ENCODE measurements at regions of chr15 and their contacts with region 1.

Region 1: DNA sequence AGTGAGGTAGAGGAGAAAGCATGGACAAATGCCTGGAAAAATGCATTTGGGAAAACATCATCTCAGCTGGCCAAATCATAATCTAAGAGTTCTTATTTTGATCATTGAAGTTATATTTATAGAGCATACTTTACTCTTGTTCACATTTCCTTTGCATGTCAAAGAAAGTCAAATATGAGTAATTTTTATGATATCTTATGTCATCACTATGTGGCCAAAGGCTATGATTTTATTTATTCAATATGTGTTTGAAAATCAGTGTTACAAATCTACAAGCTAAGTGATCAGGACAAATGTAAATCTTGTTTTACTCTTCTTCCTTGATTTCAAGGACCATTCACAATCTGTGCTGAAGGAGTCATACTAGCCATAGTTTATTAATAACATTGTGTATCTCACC is 237.2 kb upstream of the DPH6 start:
- DNase-seq: peak; percentile 71
- ATAC-seq: peak; percentile 88
- H3K4me3 ChIP-seq: no peak overlapping the region
- H3K27ac ChIP-seq: peak overlapping the region; percentile 41
- H3K4me1 ChIP-seq: peaks cover 15% of the 10 kb centered on the region
- H3K27me3 ChIP-seq: no peaks in the 10 kb centered on the region
- CTCF ChIP-seq: no peak

Region 2: DNA sequence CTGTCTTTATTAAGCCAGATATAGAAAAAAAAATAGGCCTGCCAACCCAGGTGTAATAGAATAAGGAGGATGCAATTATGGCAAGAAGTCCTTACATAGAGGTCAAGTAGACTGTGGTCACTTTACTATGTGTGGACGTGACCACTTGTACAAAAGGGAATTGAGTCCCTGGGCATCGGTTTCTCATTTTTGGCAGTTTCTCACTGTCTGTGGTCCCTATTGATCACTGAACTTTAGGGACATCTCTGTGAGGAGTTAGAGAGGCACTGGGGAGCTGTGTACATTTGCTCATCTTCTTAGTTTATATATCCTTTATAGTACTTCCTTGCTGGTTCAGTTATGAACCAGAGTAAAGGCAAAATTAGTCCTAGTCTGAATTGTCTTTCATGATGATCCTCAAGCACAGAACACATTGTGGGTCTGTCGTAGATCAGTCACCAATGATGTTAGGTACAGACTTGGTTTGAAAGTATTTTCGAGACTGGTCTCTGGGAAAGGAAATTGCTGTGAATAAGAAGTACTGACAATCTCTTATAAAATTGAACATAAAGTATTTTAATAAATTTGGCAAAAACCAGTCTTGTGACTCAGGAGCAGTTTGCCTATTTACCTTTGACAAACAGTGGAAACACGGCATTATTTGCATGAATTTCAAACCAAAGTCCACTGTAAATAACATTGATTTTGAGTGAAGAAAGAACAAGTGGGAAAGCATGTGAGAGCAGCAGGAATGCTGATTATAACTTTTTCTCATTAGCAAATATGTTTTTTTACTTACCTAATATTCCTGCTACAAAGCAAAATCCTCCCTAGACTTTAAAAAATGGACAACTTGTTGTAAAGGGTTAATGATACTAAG is 18.3 kb before region 1 on chr15:
- CTCF ChIA-PET with region 1: no interaction called
- POLR2A ChIA-PET with region 1: interaction called, 7 read pairs
- intact Hi-C with region 1: loop called (anchors 1 kb)
- DNase-seq: peak; percentile 20
- ATAC-seq: peak; percentile 75
- H3K4me3 ChIP-seq: no peak overlapping the region
- H3K27ac ChIP-seq: peak overlapping the region; percentile 6; the same call in 1 of the 2 replicates
- H3K4me1 ChIP-seq: peaks cover 7% of the 10 kb centered on the region; the same call in 1 of the 2 replicates
- H3K27me3 ChIP-seq: no peaks in the 10 kb centered on the region
- CTCF ChIP-seq: no peak

Measured in PC-3 (cell line).